CD4-positive, alpha-beta memory T cell (primary cell): ENCODE measurements at regions of chr13 and their contacts with region 1.

Region 1: DNA sequence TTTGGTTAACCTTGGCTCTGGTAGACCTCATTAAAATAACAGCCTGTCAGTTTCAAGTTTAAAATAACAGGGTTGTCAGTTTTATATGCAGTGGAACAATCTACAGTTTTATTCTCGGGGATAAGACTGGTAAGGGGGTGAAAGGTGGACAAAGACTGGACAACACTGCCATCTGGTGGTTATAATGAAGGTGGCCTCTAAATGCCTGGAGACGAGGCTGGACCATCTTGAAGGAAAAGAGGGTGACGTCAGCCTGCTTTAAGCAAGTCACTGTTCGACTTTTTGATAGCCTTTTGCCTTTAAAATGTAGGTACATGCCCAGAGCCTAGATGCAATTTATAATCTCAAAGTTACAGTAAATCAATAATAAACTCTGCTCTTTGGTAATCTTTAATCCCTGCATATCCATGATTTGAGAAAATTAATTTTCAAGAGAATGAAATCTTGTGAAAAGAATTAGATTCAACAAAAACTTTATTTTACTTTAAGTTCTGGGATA is 117.0 kb downstream of the DCT start:
- DNase-seq: peak; percentile 65 to 69 (median 67)
- H3K4me3 ChIP-seq: no peak overlapping the region
- H3K4me3 Mint-ChIP-seq: no peak overlapping the region
- H3K27ac ChIP-seq: no peak overlapping the region
- H3K27ac Mint-ChIP-seq: no peak overlapping the region
- H3K4me1 ChIP-seq: no peaks in the 10 kb centered on the region
- H3K4me1 Mint-ChIP-seq: peaks cover 0 to 3% (median 2%) of the 10 kb centered on the region in 4 donors
- H3K27me3 ChIP-seq: no peaks in the 10 kb centered on the region
- H3K27me3 Mint-ChIP-seq: peaks cover 7 to 11% of the 10 kb centered on the region in 2 donors

Region 2: GRCh38 chr13:94268661-94269060 is 93.8 kb before region 1 on chr13:
- CTCF ChIA-PET with region 1: interaction called, 9 read pairs
- POLR2A ChIA-PET with region 1: no interaction called
- intact Hi-C with region 1: loop called (anchors 1 kb)
- DNase-seq: no peak
- H3K4me3 ChIP-seq: no peak overlapping the region
- H3K4me3 Mint-ChIP-seq: no peak overlapping the region
- H3K27ac ChIP-seq: no peak overlapping the region
- H3K27ac Mint-ChIP-seq: no peak overlapping the region
- H3K4me1 ChIP-seq: no peaks in the 10 kb centered on the region
- H3K4me1 Mint-ChIP-seq: peaks cover 0 to 2% (median 0%) of the 10 kb centered on the region in 4 donors
- H3K27me3 ChIP-seq: no peaks in the 10 kb centered on the region
- H3K27me3 Mint-ChIP-seq: peaks cover 0 to 3% of the 10 kb centered on the region in 2 donors

Region 3: DNA sequence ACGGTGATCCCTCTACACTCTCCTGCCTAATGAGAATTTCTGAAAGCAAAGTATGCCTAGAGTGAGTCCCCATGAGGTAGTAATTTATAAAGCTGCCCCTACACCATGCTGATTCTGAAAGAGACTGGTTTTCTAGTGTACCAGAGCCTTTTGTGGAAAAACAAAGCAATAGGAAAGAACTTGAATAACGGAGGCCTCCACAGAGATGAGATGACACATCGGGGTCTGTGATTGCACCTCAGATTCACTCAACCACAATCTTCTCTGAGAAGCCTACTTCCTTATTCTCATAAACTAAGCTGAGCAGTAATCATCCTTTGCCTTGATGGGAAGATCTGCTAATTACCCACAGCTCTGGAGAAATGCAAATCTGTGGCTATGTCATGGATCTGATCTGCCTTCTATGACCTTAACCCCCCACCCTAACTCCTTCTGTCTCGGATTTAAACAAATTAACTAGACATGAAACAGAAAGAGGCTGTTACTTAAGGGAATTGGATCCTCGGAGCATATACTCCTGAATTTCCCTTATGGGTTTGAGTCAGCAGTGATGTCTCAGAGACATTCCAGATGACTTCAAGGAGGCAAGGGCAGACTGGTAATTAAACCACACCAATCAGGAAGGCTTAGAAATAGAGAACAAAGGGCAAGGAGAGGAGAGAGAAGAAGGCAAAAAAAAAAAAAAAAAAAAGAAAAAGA is 11.0 kb before region 1 on chr13:
- CTCF ChIA-PET with region 1: interaction called, 33 read pairs
- POLR2A ChIA-PET with region 1: interaction called, 3 read pairs
- intact Hi-C with region 1: no loop called
- DNase-seq: no peak
- H3K4me3 ChIP-seq: no peak overlapping the region
- H3K4me3 Mint-ChIP-seq: peak overlapping the region in 1 of 8 donors; percentile 23
- H3K27ac ChIP-seq: no peak overlapping the region
- H3K27ac Mint-ChIP-seq: peak overlapping the region in 1 of 7 donors; percentile 70
- H3K4me1 ChIP-seq: peaks cover 9% of the 10 kb centered on the region
- H3K4me1 Mint-ChIP-seq: peaks cover 5 to 8% (median 7%) of the 10 kb centered on the region in 4 donors
- H3K27me3 ChIP-seq: no peaks in the 10 kb centered on the region
- H3K27me3 Mint-ChIP-seq: peaks cover 8 to 12% of the 10 kb centered on the region in 2 donors